Dendritic cell treated with granulocyte-macrophage colony-stimulating factor and Interleukin-4, amounts not matched to agents 40 ng/mL and 50 ng/mL, for 4 days (primary cell): ENCODE measurements at regions of chr3 and their contacts with region 1.

Region 1: DNA sequence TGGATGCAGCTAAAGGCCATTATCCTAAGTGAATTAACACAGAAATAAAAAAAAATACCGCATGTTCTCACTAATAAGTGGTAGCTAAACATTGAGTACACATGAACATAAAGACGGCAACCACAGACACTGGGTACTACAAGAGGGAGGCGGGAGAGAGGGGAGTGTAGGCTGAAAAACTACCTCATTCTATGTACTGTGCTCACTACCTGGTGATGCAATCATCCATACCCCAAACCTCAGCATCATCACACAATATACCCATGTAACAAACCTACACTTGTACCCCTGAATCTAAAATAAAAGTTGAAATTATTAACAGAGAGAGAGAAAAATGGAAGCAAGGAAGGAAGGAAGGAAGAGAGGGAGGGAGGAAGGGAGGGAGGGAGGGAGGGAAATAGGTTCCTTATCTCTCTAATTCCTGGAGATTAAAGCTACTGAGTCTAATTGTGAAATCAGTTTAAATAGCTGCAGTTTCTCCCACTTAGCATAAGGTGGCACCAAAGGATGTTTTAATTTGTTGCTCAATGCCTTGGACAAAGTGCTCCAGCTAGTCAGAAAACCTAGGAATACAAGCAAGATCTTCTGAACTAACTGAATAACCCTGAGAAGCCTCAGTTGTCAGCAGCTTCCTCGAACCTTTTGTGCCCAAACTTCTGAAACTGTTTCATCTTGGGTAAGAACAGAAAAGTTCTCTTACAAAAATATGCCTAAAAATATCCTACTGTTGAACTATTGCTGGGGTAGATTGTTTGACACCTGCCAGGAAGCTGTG is 79.4 kb upstream of the ATP11B start:
- H3K4me3 Mint-ChIP-seq: no peak overlapping the region
- H3K27ac Mint-ChIP-seq: no peak overlapping the region
- H3K4me1 Mint-ChIP-seq: peaks cover 18% of the 10 kb centered on the region
- H3K27me3 Mint-ChIP-seq: no peaks in the 10 kb centered on the region

Region 2: DNA sequence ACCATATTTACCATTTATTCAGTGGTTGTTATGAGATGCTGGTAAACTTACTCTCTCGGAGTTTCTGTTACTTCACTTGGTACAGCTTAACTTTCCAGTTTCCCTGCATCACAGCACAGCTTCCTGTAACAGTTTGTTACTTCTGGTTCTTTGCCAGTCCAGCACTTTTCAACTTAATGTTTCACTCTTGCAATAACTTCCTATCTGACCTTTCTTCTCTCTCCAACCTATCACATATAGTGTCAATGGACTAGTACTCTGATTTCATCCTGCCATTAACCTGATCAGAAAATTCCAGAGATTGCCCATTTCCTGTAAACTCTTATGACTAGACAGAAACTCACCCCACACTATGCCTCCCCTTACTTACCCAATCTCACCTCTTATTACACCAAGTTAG is 75.4 kb after region 1 on chr3:
- intact Hi-C with region 1: loop called (anchors 10 kb)
- H3K4me3 Mint-ChIP-seq: no peak overlapping the region
- H3K27ac Mint-ChIP-seq: no peak overlapping the region
- H3K4me1 Mint-ChIP-seq: peaks cover 7% of the 10 kb centered on the region
- H3K27me3 Mint-ChIP-seq: no peaks in the 10 kb centered on the region

Region 3: DNA sequence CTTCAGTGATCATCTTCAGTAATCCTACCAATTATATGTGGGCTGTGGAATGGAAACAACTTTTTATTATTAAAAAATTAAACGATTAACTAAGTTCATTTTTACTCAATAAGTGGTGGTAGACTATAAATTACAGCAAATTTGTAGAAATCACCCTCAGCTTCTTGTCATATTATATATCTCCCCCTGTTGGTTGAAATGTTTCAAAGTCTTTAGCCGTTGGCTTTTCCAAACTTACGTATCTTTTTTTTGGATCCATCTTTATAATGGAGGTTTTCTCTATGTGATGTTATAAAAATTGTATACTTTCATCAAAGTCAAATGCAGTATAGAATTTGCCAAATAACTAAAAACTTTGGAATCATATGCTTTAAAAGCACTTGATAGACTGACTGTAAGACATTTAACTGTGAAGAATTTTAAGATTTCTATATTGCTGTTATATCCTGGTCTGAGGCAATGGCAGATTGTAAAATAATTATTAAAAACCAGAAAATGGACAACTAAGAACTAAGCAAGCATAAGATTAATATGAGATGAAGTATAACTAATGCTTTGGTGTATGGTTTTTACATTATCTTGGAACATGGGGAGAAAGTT is 124.0 kb after region 1 on chr3:
- intact Hi-C with region 1: loop called (anchors 2 kb)
- H3K4me3 Mint-ChIP-seq: no peak overlapping the region
- H3K27ac Mint-ChIP-seq: no peak overlapping the region
- H3K4me1 Mint-ChIP-seq: no peaks in the 10 kb centered on the region
- H3K27me3 Mint-ChIP-seq: no peaks in the 10 kb centered on the region

Region 4: DNA sequence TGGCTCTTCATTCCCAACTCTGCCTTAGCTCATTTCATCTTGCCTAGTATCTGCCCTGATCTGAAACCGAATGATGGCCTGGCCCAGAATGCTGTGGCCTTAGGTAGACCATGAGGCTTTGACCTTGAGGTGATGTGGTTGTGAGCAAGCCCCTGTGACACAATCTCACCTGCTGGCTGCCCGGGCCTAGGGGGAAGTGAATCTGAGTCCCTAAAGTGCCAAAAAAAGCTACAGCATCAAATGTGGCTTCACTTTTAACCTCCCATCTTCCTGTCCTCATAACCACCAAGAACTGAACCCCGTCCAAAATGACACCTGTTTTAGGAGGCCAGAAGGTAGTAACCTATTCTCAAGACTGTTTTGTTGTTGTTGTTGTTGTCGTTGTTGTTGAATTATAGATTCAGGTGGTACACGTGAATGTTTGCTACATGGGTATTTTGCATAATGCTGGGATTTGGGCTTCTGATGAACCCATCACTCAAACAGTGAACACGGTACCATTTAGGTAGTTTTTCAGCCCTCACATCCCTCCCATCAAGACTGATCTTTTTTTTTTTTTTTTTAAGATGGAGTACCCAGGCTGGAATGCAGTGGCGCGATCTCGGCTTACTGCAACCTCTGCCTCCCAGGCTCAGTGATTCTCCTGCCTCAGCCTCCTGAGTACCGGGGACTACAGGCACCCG is 330.8 kb after region 1 on chr3:
- intact Hi-C with region 1: loop called (anchors 10 kb)
- H3K4me3 Mint-ChIP-seq: no peak overlapping the region
- H3K27ac Mint-ChIP-seq: no peak overlapping the region
- H3K4me1 Mint-ChIP-seq: peaks cover 11% of the 10 kb centered on the region
- H3K27me3 Mint-ChIP-seq: no peaks in the 10 kb centered on the region

Region 5: DNA sequence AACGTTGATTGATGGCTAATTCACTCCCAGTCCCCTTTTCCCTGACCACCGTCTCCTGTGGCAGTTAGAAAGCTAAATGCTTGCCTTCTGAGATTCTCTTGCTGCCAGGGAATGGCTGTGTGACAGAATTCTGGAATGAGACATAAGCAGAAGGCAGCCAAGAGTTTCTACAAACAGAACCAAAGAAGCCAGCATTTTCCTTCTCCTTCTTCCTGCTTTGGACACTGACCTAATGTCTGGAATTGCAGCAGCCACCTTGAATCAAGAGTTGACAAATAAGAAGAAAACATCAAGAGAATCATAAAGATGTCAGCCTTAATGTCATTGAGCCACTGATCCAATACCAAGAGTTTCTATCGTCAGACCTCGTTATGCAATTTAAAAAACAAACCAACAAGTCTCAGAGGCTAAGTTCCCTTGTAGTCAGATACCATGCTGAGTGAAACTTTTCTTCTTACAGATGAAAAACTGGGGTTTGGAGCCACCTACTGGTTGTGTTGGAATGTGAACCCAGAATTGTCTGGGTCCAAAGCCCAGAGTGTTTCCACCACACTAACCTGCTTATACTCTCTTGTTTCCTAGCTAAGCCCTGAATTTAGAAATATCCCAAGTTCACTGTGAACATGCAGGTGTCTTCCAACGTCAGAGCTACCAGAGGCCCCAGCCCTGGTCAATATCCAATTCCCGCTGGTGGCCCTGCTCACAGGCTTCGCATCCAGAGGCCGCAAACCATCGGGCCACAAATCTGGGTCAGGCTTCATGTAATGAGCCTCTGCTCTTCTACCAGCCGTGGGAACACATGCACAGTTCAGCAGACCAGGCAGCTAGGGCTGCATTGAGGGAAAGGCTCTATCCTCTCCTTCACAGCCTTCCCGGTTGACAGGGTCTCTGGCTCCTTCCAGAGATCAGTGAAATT is 672.0 kb after region 1 on chr3:
- intact Hi-C with region 1: loop called (anchors 5 kb)
- H3K4me3 Mint-ChIP-seq: no peak overlapping the region
- H3K27ac Mint-ChIP-seq: peak overlapping the region; percentile 39
- H3K4me1 Mint-ChIP-seq: peaks cover 17% of the 10 kb centered on the region
- H3K27me3 Mint-ChIP-seq: no peaks in the 10 kb centered on the region